Activated CD4-positive, alpha-beta memory T cell treated with anti-CD3 and anti-CD28 coated beads for 36 hours (primary cell): ENCODE measurements at regions of chr7 and their contacts with region 1.

Region 1: DNA sequence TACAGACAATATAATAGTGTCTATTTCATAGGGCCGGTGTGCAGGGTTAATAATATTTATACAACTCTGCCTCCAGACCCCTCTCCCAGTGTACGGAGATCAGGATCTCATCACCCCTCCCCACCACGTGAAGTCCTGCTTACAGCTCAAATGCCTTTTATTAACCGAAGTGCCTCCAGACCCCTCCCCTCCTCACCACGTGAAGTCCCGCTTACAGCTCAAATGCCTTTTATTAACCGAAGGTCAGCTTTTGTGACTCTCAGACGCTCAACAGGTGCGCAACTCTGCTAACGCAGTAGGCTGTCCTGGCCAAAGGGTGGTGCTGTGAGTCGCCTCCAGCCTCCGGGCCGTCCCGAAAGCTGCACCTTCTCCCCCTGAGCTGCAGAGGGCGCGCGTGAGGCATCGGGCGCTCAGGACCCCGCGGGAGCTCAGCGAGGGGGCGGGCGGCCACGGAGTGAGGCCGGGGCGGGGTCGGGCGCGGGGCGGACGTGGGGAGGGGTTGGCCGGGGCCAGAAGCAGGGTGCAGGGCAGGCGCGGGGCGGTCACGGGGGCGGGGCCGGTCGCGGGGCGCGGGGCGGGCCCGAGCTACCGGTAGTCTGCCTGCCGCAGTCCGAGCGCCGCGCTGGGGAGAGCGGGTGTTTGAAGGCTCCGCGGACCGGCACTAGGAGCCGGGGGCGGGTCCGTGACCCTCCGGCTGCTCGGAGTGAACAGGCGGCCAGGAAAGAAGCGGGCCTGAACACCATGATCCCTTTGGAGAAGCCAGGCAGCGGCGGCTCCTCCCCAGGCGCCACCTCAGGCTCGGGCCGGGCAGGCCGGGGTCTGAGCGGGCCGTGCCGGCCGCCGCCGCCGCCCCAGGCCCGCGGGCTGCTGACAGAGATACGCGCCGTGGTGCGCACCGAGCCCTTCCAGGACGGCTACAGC is at the start of gene STK17A:
- DNase-seq: peak; percentile 97
- H3K4me3 Mint-ChIP-seq: peak within 1 kb of the TSS; percentile 95
- H3K27ac Mint-ChIP-seq: peak within 1 kb of the TSS; percentile 98
- H3K4me1 Mint-ChIP-seq: peaks cover 20% of the 10 kb centered on the region
- H3K27me3 Mint-ChIP-seq: peaks cover 5% of the 10 kb centered on the region
- total RNA-seq, gene STK17A: 58.2 to 62.6 TPM

Region 2: GRCh38 chr7:43604251-43604650 is 21.5 kb after region 1 on chr7:
- CTCF ChIA-PET with region 1: interaction called, 13 read pairs
- POLR2A ChIA-PET with region 1: no interaction called
- intact Hi-C with region 1: no loop called
- DNase-seq: no peak
- H3K4me3 Mint-ChIP-seq: no peak overlapping the region
- H3K27ac Mint-ChIP-seq: no peak overlapping the region
- H3K4me1 Mint-ChIP-seq: peaks cover 44% of the 10 kb centered on the region
- H3K27me3 Mint-ChIP-seq: no peaks in the 10 kb centered on the region

Region 3: DNA sequence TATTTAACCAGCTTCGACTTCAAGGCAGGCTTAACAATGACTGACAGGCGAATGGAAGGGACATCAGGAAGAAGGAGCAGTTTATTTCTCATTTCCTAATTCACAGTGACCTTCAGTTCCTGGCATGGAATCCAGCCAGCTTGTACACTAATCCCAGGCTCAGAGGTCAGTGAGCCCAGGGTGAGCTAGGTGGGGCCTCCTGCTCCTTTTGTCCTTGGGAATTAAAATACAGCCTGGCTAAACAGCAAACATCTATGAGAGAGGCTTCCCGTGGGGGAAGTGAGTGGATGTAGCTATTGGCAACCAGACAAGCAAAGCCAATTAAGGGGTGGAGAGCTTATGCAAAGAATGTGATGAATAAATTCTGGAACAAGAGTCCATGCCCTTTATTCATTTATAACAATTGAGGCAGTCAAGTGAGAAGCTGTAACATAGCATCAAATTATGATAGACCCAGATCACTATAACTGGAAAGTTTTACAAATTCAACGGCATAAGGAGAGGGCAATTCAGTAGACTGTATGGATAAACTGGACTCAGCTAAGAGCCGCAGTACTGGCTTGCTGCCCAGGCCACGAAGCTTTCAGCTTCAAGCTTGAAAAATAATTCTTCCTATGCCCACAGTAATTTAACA is 57.2 kb after region 1 on chr7:
- CTCF ChIA-PET with region 1: interaction called, 130 read pairs
- POLR2A ChIA-PET with region 1: interaction called, 3 read pairs
- intact Hi-C with region 1: no loop called
- DNase-seq: no peak
- H3K4me3 Mint-ChIP-seq: no peak overlapping the region
- H3K27ac Mint-ChIP-seq: peak overlapping the region; percentile 60
- H3K4me1 Mint-ChIP-seq: peaks cover 77% of the 10 kb centered on the region
- H3K27me3 Mint-ChIP-seq: no peaks in the 10 kb centered on the region

Region 4: DNA sequence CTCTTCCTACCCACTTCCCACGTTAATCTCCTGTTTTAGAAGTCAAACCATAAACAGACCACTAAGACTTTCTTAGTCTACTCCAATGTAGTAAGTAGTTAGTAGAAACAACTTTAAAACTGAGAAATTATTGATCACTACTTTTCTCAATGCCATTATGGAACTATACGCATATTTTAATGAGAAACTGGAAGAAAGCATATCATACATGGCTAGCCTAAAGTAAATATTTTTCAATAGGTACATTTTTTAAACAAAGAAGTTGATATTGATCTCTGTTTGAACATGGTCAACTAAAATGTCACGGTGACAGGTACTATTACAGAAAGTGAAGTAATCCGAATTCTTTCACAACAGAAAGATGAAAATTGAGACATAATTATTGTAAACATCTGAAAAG is 99.4 kb after region 1 on chr7:
- CTCF ChIA-PET with region 1: interaction called, 58 read pairs
- POLR2A ChIA-PET with region 1: interaction called, 5 read pairs
- intact Hi-C with region 1: no loop called
- DNase-seq: no peak
- H3K4me3 Mint-ChIP-seq: no peak overlapping the region
- H3K27ac Mint-ChIP-seq: no peak overlapping the region
- H3K4me1 Mint-ChIP-seq: peaks cover 70% of the 10 kb centered on the region
- H3K27me3 Mint-ChIP-seq: no peaks in the 10 kb centered on the region

Region 5: DNA sequence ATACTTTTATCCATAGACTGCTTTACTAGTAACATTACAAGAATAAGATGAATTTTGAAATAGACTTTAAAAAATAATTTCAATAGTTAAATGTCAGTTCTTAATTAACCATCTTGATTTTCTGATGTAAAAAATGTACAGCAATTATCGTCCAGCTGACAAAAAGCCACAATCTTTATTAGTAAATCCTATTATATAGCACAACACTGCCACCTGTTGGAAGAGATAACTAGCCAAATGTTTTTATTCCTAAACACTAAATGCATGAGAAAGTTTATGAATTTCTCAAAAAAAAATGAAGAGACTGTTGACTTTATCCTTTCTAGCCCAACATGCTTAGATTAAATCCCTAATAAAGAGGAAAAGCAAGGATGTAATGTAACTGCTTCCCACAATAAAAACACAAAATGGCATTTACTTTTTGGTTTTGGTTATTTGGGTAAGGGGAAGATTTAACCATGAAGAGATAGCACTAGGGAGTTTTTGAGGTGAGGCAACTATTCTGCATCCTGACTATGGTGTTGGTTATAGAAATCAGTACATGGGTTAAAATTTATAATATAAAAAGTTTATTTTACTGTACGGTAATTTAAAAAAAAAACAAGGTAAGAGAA is 138.5 kb after region 1 on chr7:
- CTCF ChIA-PET with region 1: interaction called, 127 read pairs
- POLR2A ChIA-PET with region 1: interaction called, 7 read pairs
- intact Hi-C with region 1: loop called (anchors 1 kb)
- DNase-seq: no peak
- H3K4me3 Mint-ChIP-seq: no peak overlapping the region
- H3K27ac Mint-ChIP-seq: no peak overlapping the region
- H3K4me1 Mint-ChIP-seq: peaks cover 40% of the 10 kb centered on the region
- H3K27me3 Mint-ChIP-seq: no peaks in the 10 kb centered on the region

Region 6: GRCh38 chr7:43764039-43764761 is 181.4 kb after region 1 on chr7:
- CTCF ChIA-PET with region 1: interaction called, 20 read pairs
- POLR2A ChIA-PET with region 1: interaction called, 4 read pairs
- intact Hi-C with region 1: no loop called
- DNase-seq: peak; percentile 74
- H3K4me3 Mint-ChIP-seq: no peak overlapping the region
- H3K27ac Mint-ChIP-seq: peak overlapping the region; percentile 6
- H3K4me1 Mint-ChIP-seq: peaks cover 43% of the 10 kb centered on the region
- H3K27me3 Mint-ChIP-seq: no peaks in the 10 kb centered on the region

Region 7: GRCh38 chr7:43844031-43844656 is 261.4 kb after region 1 on chr7:
- CTCF ChIA-PET with region 1: interaction called, 173 read pairs
- POLR2A ChIA-PET with region 1: interaction called, 4 read pairs
- intact Hi-C with region 1: loop called (anchors 1 kb)
- DNase-seq: peak; percentile 22
- H3K4me3 Mint-ChIP-seq: no peak overlapping the region
- H3K27ac Mint-ChIP-seq: no peak overlapping the region
- H3K4me1 Mint-ChIP-seq: no peaks in the 10 kb centered on the region
- H3K27me3 Mint-ChIP-seq: peaks cover 4% of the 10 kb centered on the region